Naive thymus-derived CD4-positive, alpha-beta T cell (primary cell): ENCODE measurements at regions of chr1 and their contacts with region 1.

Region 1: DNA sequence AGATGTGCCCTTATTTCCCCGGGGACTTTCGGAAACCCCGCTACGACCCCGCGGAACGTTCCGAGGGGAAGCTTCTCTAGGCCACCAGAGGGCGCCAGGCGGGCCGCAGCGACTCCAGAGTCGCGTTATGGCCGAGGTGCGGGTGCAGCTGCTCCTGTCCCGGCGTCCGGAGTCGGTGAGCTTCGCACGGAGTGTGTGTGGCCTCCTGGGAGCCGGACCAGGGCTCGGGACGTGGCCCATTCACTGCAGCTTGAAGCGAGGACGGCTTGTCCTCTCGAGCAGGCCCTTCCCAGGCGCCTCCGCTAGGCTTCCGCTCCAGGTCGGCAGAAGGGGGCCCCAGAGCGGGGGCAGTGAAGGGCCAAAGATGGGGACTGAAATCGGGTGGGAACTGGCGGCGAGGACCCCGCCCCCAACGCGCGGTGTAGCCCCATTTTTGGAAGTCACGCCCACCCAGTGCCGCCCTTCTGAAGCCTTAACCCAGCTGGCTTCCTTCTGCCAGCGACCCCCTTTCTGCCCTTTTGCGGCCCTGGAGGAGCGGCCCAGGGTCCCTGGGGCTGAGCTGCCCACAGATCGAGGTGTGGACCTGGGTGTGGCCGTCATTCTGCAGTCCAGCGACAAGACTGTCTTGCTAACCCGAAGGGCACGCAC is at the start of gene NUDT17:
- DNase-seq: peak; percentile 52 to 78 (median 71)
- ATAC-seq: peak; percentile 89
- H3K4me3 ChIP-seq: peak within 1 kb of the TSS; percentile 86
- H3K4me3 Mint-ChIP-seq: no peak within 1 kb of the TSS
- H3K27ac ChIP-seq: peak within 1 kb of the TSS; percentile 69
- H3K27ac Mint-ChIP-seq: peak within 1 kb of the TSS in 5 of 9 donors; percentile 54 to 93 (median 77)
- H3K4me1 ChIP-seq: peaks cover 10 to 15% of the 10 kb centered on the region in 2 donors
- H3K4me1 Mint-ChIP-seq: peaks cover 6 to 21% (median 14%) of the 10 kb centered on the region in 7 donors
- H3K27me3 ChIP-seq: no peaks in the 10 kb centered on the region
- H3K27me3 Mint-ChIP-seq: no peaks in the 10 kb centered on the region
- total RNA-seq, gene NUDT17: 2.9 to 6.7 (median 3.4) TPM

Region 2: DNA sequence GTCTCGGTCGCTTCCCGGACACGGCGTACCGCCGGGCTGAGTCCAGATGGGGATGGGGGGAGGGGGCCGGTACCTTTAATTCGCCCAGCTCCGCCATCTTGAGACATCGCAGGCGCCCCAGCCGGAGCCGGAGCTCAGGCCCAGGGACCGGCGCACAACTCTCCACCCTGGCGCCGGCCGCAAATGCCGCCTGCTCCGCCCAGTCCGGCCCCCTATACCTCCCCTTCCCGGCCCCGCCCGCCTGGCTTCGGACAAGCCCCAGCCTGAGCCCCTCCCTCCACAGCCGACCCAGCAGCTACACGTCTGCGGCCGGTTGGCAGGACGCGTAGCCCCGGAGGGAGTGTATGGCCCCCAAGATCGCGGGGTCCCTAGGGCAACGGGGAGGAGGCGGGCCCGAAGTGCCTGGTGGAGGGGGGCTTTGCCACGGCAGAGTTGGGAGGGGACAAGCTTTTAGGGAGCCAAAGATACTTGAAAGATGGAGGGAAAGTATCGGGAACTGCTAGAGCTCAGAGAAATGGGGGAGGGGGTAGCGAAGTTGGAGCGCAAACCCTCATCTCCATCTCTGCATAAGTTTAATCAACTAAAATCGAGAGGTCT is 13.4 kb after region 1 on chr1 and contains the start of gene PIAS3:
- CTCF ChIA-PET with region 1: interaction called, 81 read pairs
- POLR2A ChIA-PET with region 1: interaction called, 49 read pairs
- intact Hi-C with region 1: loop called (anchors 1 kb)
- DNase-seq: peak; percentile 67 to 93 (median 77)
- ATAC-seq: peak; percentile 93
- H3K4me3 ChIP-seq: peak within 1 kb of the TSS; percentile 88
- H3K4me3 Mint-ChIP-seq: peak within 1 kb of the TSS; percentile 96 to 99 (median 98)
- H3K27ac ChIP-seq: peak within 1 kb of the TSS; percentile 80
- H3K27ac Mint-ChIP-seq: peak within 1 kb of the TSS; percentile 84 to 96 (median 91)
- H3K4me1 ChIP-seq: peaks cover 7 to 10% of the 10 kb centered on the region in 2 donors
- H3K4me1 Mint-ChIP-seq: peaks cover 10 to 22% (median 12%) of the 10 kb centered on the region in 7 donors
- H3K27me3 ChIP-seq: no peaks in the 10 kb centered on the region
- H3K27me3 Mint-ChIP-seq: peaks cover 0 to 11% (median 0%) of the 10 kb centered on the region in 5 donors
- total RNA-seq, gene PIAS3: 21.4 to 28.3 (median 23.0) TPM

Region 3: DNA sequence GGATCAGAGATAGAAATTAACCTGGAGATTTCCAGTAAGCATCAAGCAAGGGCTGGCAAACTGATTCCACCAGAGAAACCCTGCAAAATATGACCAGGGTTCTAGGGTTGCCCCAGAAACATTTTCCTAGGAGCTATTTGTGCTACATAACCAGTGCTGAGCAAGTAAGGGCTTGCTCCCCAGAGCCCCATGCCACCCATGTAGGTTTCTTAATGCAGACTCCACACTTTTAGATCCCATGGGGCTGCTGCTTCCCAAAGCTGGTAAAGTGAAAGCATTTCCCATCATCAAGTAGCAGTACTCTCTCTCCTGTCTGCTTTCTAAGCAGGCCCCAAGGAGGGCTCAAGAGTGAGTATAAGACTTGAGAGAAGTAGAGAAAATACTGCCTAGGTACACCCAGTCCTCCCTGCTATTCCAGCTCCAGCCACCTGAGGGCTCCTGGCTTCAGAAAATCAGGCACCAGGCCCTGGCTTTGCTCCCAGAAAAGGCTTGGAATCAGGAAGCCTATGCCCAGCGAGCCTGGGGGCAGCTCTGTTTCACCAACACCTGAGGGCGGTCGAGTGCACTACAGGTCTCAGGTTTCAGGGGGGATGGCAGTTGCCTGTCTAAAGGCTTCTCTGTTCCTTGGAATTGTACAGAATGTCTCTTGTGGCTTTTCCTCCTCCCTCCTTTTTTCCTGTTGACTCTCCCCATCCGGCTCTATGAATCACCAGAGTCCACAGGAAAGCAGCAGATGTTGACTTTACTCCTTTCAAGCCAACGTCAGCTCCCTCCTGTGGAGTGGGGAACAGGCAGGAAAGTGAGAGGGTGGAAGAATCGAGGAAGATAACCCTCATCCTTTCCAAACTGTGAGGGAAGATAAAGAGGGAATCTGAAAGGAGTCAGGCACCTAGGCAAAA is 46.2 kb after region 1 on chr1:
- CTCF ChIA-PET with region 1: interaction called, 5 read pairs
- POLR2A ChIA-PET with region 1: interaction called, 4 read pairs
- intact Hi-C with region 1: loop called in 1 of 2 experiments (anchors 1 kb)
- DNase-seq: peak; percentile 11 to 61 (median 33)
- ATAC-seq: peak; percentile 76
- H3K4me3 ChIP-seq: no peak overlapping the region
- H3K4me3 Mint-ChIP-seq: no peak overlapping the region
- H3K27ac ChIP-seq: no peak overlapping the region
- H3K27ac Mint-ChIP-seq: peak overlapping the region in 1 of 9 donors; percentile 36
- H3K4me1 ChIP-seq: no peaks in the 10 kb centered on the region
- H3K4me1 Mint-ChIP-seq: peaks cover 0 to 5% (median under 1%) of the 10 kb centered on the region in 7 donors
- H3K27me3 ChIP-seq: no peaks in the 10 kb centered on the region
- H3K27me3 Mint-ChIP-seq: peaks cover 0 to 5% (median 0%) of the 10 kb centered on the region in 5 donors

Region 4: DNA sequence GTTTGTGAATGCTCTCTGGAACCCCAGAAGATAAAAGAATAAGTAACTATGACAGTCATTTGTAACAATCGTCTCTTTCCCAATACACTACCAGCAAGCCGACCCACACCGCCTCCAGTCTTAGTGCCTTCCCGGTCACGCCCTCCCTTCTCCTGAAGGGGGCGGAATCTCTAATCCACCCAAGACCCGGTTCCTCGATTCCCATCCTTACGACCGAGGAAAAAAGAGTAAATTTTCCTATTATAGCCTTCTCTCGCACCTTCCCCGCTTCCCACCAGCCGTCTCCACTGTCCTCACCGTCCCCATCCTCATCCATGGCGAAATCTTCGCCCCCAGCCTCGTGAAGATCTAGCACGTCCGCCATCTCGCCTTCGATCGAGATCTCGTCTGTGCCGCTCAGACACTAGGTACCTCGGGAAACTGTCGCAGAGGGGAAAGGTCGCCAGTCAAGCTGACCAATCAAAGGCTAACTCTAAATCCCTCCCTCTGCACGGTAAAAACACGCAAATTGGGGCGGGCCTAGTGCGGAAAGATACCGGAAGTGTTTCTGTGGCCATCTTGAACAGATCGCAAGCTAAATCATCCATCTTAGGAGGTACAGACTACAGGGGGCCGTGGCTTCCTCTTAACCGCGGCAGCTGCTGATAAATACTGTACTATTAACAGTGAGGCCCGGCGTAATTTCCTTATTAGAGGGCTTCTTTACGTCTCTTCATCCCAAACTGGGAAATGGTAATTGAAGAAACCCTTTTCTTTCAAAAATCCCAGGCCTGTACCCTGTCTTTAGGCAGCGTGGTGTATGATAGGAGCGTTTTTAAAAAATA is 81.6 kb after region 1 on chr1 and contains the start of gene RBM8A:
- CTCF ChIA-PET with region 1: interaction called, 4 read pairs
- POLR2A ChIA-PET with region 1: interaction called, 16 read pairs
- intact Hi-C with region 1: no loop called
- DNase-seq: peak; percentile 70 to 98 (median 96)
- ATAC-seq: peak; percentile 98
- H3K4me3 ChIP-seq: peak within 1 kb of the TSS; percentile 98
- H3K4me3 Mint-ChIP-seq: peak within 1 kb of the TSS in 4 of 10 donors; percentile 48 to 85 (median 75)
- H3K27ac ChIP-seq: peak within 1 kb of the TSS; percentile 100
- H3K27ac Mint-ChIP-seq: peak within 1 kb of the TSS in 3 of 9 donors; percentile 56 to 95 (median 94)
- H3K4me1 ChIP-seq: peaks cover 26 to 28% of the 10 kb centered on the region in 2 donors
- H3K4me1 Mint-ChIP-seq: peaks cover 11 to 33% (median 23%) of the 10 kb centered on the region in 7 donors
- H3K27me3 ChIP-seq: no peaks in the 10 kb centered on the region
- H3K27me3 Mint-ChIP-seq: no peaks in the 10 kb centered on the region
- total RNA-seq, gene RBM8A: 115 to 182 (median 120) TPM

Region 5: DNA sequence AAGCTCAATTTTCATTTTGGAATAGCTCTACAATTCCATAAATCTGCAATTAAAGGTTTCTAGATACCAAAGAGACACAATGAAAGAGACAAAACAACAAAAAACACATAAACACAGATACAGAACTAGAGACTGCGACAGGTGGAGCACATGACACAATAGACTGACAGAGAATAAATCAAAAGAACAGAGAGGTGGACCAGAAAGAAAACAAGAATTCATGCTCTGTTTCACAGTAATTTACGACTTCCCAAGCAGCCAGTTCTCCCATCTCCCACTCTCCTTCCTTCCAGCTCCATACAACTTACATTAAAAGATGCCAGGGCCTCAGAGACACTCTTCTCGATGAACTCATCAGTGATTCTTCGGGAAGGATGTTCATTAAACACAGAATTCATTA is 96.8 kb after region 1 on chr1:
- CTCF ChIA-PET with region 1: no interaction called
- POLR2A ChIA-PET with region 1: no interaction called
- intact Hi-C with region 1: no loop called
- DNase-seq: no peak
- ATAC-seq: no peak
- H3K4me3 ChIP-seq: no peak overlapping the region
- H3K4me3 Mint-ChIP-seq: no peak overlapping the region
- H3K27ac ChIP-seq: no peak overlapping the region
- H3K27ac Mint-ChIP-seq: peak overlapping the region in 2 of 9 donors; percentile 41 to 73
- H3K4me1 ChIP-seq: no peaks in the 10 kb centered on the region
- H3K4me1 Mint-ChIP-seq: peaks cover 0 to 24% (median 13%) of the 10 kb centered on the region in 7 donors
- H3K27me3 ChIP-seq: no peaks in the 10 kb centered on the region
- H3K27me3 Mint-ChIP-seq: no peaks in the 10 kb centered on the region

Region 6: GRCh38 chr1:146007506-146008133 is 162.0 kb after region 1 on chr1:
- CTCF ChIA-PET with region 1: interaction called, 44 read pairs
- POLR2A ChIA-PET with region 1: interaction called, 7 read pairs
- intact Hi-C with region 1: no loop called
- DNase-seq: peak in 1 of 9 donors; percentile 31
- ATAC-seq: no peak
- H3K4me3 ChIP-seq: no peak overlapping the region
- H3K4me3 Mint-ChIP-seq: peak overlapping the region in 9 of 10 donors; percentile 73 to 93 (median 83)
- H3K27ac ChIP-seq: peak overlapping the region; percentile 64
- H3K27ac Mint-ChIP-seq: peak overlapping the region; percentile 86 to 97 (median 93)
- H3K4me1 ChIP-seq: peaks cover 18 to 36% of the 10 kb centered on the region in 2 donors
- H3K4me1 Mint-ChIP-seq: peaks cover 31 to 56% (median 45%) of the 10 kb centered on the region in 7 donors
- H3K27me3 ChIP-seq: no peaks in the 10 kb centered on the region
- H3K27me3 Mint-ChIP-seq: no peaks in the 10 kb centered on the region